ENCODE measurements at regions of chr3 and their contacts with region 1.

Region 1: GRCh38 chr3:48663415-48664312 is 978 bp upstream of the CELSR3 start:
- DNase-seq: peak; percentile 93 to 98
- H3K4me3 ChIP-seq: peak overlapping the region; percentile 76
- H3K27ac ChIP-seq: peak overlapping the region; percentile 93
- H3K4me1 ChIP-seq: 0 out of 2 replicates have a peak, but pooled peaks cover 4% of the 10 kb centered on the region
- H3K27me3 ChIP-seq: no peaks in the 10 kb centered on the region
- CTCF ChIP-seq: peak; percentile 78

Region 2: DNA sequence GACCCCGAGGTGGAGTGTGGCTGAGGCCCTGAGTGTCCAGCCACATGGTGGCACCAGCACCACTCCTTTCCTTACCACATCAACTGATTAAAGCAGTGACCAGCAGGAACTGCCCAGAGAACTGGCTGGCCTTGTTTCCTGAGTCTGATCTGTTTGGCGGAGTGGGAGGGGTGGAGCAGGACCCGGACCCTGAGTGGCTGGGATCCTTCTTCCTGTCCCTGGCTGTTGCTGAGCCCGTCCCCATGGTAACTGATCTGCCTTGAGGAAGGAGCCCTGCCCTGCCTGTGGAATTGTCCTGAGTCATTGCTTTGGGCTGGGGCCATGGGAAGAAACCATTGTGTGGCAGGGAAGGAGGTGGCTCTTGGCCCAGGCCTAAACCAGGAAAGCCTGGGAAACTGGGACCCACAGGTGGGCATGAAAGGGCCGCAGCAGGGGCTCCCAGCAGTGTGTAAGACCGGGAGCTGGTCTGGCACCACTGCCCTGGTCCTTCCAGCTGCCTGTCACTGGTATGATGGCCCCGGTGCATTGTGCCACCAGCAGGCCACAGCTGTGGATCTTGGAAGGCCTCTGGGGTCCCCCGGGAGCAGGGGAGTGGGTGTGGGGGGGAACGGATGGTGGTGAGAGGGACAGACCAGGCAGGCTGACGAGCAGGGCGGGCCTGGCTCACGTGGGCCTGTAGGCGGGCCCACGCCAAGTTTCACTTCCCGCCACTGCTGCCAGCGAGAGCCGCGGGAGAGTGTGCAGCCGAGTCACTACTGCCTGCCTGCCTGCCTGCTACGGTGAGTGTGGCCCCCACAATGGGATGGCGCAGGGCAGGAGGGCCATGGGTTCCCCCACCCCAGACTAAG is 197.9 kb before region 1 on chr3:
- CTCF ChIA-PET with region 1: no interaction called
- POLR2A ChIA-PET with region 1: no interaction called
- intact Hi-C with region 1: loop called (anchors 1 kb)
- DNase-seq: peak; percentile 98 to 100
- H3K4me3 ChIP-seq: peak overlapping the region; percentile 63
- H3K27ac ChIP-seq: peak overlapping the region; percentile 99
- H3K4me1 ChIP-seq: peaks cover 21% of the 10 kb centered on the region
- H3K27me3 ChIP-seq: no peaks in the 10 kb centered on the region
- CTCF ChIP-seq: peak; percentile 70

Region 3: DNA sequence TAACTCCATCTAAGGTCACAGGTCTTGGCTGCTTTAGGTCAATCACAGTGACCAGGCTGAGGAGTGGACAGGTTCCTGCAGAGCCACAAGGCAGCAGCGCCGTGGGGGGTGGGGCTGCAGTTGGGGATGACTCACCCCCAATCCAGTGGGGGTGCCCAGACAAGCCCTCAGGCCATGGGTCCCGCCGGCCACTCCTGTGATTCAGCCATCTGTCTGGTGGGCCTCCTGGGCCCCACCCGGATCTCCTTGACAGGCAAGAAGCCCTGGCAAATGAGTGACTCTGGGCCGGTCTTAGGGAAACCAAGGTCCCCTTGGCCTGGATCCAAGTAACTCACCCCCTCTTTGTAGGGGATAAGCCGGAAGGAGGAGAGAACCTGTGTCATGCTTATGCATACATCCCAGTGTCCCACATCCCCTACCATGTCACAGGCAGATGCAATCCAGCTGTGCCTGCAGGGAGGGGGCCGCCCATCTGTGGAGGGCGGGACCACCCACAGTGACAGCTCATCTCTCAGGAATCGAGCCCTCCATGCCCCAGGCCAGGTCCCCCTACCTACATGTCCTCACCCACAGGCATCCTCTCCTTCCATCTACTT is 68.0 kb before region 1 on chr3:
- CTCF ChIA-PET with region 1: no interaction called
- POLR2A ChIA-PET with region 1: interaction called, 3 read pairs
- intact Hi-C with region 1: loop called (anchors 5 kb)
- DNase-seq: peak; percentile 86 to 98
- H3K4me3 ChIP-seq: peak overlapping the region; percentile 62; the same call in 1 of the 2 replicates
- H3K27ac ChIP-seq: peak overlapping the region; percentile 14
- H3K4me1 ChIP-seq: peaks cover 53% of the 10 kb centered on the region
- H3K27me3 ChIP-seq: no peaks in the 10 kb centered on the region
- CTCF ChIP-seq: no peak

Region 4: DNA sequence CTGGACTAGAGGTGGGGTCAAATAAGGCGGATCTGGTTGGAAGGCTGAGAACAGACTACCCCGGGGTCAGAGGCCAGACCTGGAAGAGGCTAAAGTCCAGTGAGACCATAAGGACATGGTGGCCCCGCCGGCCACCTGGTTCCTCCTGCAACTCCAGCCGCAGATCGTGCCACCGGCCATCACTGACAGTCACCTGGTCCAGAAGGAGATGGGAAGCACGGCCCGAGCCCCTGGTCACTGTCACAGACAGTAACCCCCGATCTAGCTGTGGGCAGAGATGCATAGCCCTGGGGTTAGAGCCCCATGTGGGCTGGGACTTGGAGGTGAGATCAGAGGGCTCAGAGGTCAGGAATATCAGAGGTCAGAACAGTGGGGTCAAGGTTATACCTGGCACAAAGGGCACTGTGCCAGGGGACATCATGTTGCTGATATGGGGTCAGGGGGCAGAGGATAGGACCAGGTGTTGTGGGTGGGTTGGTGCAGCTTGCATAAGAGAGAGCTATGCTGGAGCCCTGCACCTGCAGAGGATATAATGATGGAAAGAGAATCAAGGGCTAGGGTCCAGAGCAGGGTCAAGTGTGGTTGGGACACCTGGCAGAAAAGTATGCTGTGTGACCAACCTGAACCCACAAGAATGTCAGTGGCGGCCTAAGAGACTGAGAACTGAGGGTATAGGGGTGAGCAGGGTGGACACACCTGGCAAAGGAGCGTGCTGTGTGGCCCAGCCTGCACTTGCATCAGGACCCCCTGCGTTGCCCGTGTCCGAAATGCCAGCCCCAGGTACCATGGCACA is 10.5 kb before region 1 on chr3:
- CTCF ChIA-PET with region 1: no interaction called
- POLR2A ChIA-PET with region 1: no interaction called
- intact Hi-C with region 1: loop called (anchors 1 kb)
- DNase-seq: peak; percentile 58
- H3K4me3 ChIP-seq: no peak overlapping the region
- H3K27ac ChIP-seq: no peak overlapping the region
- H3K4me1 ChIP-seq: no peaks in the 10 kb centered on the region
- H3K27me3 ChIP-seq: no peaks in the 10 kb centered on the region
- CTCF ChIP-seq: no peak

Region 5: GRCh38 chr3:48685602-48686511 is 22.2 kb after region 1 on chr3 and contains the start of gene NCKIPSD:
- CTCF ChIA-PET with region 1: interaction called, 6 read pairs
- POLR2A ChIA-PET with region 1: no interaction called
- intact Hi-C with region 1: loop called (anchors 2 kb)
- DNase-seq: peak; percentile 52 to 86
- H3K4me3 ChIP-seq: peak within 1 kb of the TSS; percentile 72
- H3K27ac ChIP-seq: peak within 1 kb of the TSS; percentile 46; the same call in 1 of the 2 replicates
- H3K4me1 ChIP-seq: peaks cover 9% of the 10 kb centered on the region
- H3K27me3 ChIP-seq: no peaks in the 10 kb centered on the region
- CTCF ChIP-seq: peak; percentile 72
- total RNA-seq, gene NCKIPSD: 40.0 and 53.3 TPM in 2 replicates

Region 6: DNA sequence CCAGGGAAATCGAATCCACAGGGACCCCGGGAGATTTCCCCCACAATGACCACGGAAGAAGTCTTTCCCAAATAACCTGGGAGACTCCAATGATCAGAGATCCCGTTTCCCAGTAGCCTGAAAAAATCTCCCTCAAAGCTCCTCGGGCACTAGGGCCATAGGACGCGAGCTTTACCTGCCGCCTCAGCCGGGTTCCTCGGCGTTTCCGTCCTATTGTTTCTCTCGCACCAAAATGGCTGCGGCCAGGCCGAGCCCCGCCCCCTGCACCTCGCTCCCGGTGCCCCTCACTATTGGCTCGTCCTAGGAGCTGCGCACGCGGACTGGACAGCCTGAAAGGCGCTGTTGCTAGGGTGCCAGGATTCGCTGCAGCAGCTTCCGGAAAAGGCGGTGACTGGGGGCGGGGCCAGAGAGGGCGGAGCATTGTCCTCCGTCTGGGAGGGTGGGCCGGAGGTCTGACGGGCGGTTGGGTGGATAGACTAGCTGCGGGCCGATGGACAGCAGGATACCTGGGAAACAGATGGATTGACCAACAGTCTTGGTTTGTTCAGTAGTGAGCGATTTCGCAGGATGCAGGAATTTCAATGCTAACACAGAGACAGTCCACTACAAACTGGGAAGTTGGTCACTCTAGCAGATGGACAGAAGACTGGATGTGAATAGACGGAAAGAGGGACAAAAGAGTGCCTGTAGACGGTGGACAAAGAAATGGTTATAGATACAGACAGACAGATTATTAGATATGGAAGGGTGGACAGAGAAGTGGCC is 53.5 kb after region 1 on chr3 and contains the start of gene IP6K2:
- CTCF ChIA-PET with region 1: no interaction called
- POLR2A ChIA-PET with region 1: interaction called, 4 read pairs
- intact Hi-C with region 1: loop called (anchors 1 kb)
- DNase-seq: peak; percentile 92 to 99
- H3K4me3 ChIP-seq: peak within 1 kb of the TSS; percentile 99
- H3K27ac ChIP-seq: peak within 1 kb of the TSS; percentile 53
- H3K4me1 ChIP-seq: peaks cover 17% of the 10 kb centered on the region
- H3K27me3 ChIP-seq: no peaks in the 10 kb centered on the region
- CTCF ChIP-seq: no peak
- total RNA-seq, gene IP6K2: 123 and 144 TPM in 2 replicates

Region 7: GRCh38 chr3:48983096-48983495 is 319.4 kb after region 1 on chr3:
- CTCF ChIA-PET with region 1: no interaction called
- POLR2A ChIA-PET with region 1: interaction called, 19 read pairs
- intact Hi-C with region 1: no loop called
- DNase-seq: no peak
- H3K4me3 ChIP-seq: no peak overlapping the region
- H3K27ac ChIP-seq: no peak overlapping the region
- H3K4me1 ChIP-seq: no peaks in the 10 kb centered on the region
- H3K27me3 ChIP-seq: no peaks in the 10 kb centered on the region
- CTCF ChIP-seq: no peak